ENCODE measurements at regions of chr2 and their contacts with region 1.

Region 1: GRCh38 chr2:43484323-43484930 is 111.4 kb downstream of the THADA start:
- DNase-seq: peak; percentile 65 to 78 (median 77)
- H3K4me3 ChIP-seq: no peak overlapping the region
- H3K4me3 Mint-ChIP-seq: no peak overlapping the region
- H3K27ac ChIP-seq: peak overlapping the region in 1 of 2 donors; percentile 60
- H3K27ac Mint-ChIP-seq: peak overlapping the region in 5 of 7 donors; percentile 45 to 80 (median 59)
- H3K4me1 ChIP-seq: peaks cover 21 to 29% of the 10 kb centered on the region in 2 donors
- H3K4me1 Mint-ChIP-seq: peaks cover 49% of the 10 kb centered on the region
- H3K27me3 ChIP-seq: no peaks in the 10 kb centered on the region
- H3K27me3 Mint-ChIP-seq: no peaks in the 10 kb centered on the region
- CTCF ChIP-seq: peak; percentile 87

Region 2: GRCh38 chr2:42944779-42945415 is 539.5 kb before region 1 on chr2:
- intact Hi-C with region 1: loop called (anchors 5 kb)
- DNase-seq: no peak
- H3K4me3 ChIP-seq: no peak overlapping the region
- H3K4me3 Mint-ChIP-seq: no peak overlapping the region
- H3K27ac ChIP-seq: no peak overlapping the region
- H3K27ac Mint-ChIP-seq: peak overlapping the region in 1 of 7 donors; percentile 35
- H3K4me1 ChIP-seq: peaks cover 22 to 30% of the 10 kb centered on the region in 2 donors
- H3K4me1 Mint-ChIP-seq: peaks cover 38% of the 10 kb centered on the region
- H3K27me3 ChIP-seq: no peaks in the 10 kb centered on the region
- H3K27me3 Mint-ChIP-seq: peaks cover 0 to 3% (median 1%) of the 10 kb centered on the region in 3 donors
- CTCF ChIP-seq: no peak

Region 3: GRCh38 chr2:42974721-42975717 is 509.4 kb before region 1 on chr2:
- intact Hi-C with region 1: loop called (anchors 5 to 10 kb)
- DNase-seq: peak; percentile 35 to 65 (median 46)
- H3K4me3 ChIP-seq: peak overlapping the region; percentile 17 to 72 (median 48)
- H3K4me3 Mint-ChIP-seq: peak overlapping the region; percentile 72 to 87
- H3K27ac ChIP-seq: peak overlapping the region; percentile 49 to 83
- H3K27ac Mint-ChIP-seq: peak overlapping the region; percentile 43 to 90 (median 83)
- H3K4me1 ChIP-seq: peaks cover 41 to 59% of the 10 kb centered on the region in 2 donors
- H3K4me1 Mint-ChIP-seq: peaks cover 71% of the 10 kb centered on the region
- H3K27me3 ChIP-seq: no peaks in the 10 kb centered on the region
- H3K27me3 Mint-ChIP-seq: peaks cover 0 to 3% (median 0%) of the 10 kb centered on the region in 3 donors
- CTCF ChIP-seq: peak; percentile 95

Region 4: GRCh38 chr2:43305517-43305916 is 178.9 kb before region 1 on chr2:
- intact Hi-C with region 1: loop called in 1 of 2 experiments (anchors 10 kb)
- DNase-seq: peak; percentile 82 to 88 (median 86)
- H3K4me3 ChIP-seq: no peak overlapping the region
- H3K4me3 Mint-ChIP-seq: peak overlapping the region; percentile 49 to 58
- H3K27ac ChIP-seq: peak overlapping the region; percentile 96 to 97
- H3K27ac Mint-ChIP-seq: peak overlapping the region; percentile 99 to 100 (median 100)
- H3K4me1 ChIP-seq: peaks cover 48 to 56% of the 10 kb centered on the region in 2 donors
- H3K4me1 Mint-ChIP-seq: peaks cover 62% of the 10 kb centered on the region
- H3K27me3 ChIP-seq: no peaks in the 10 kb centered on the region
- H3K27me3 Mint-ChIP-seq: peaks cover 0 to 5% (median 0%) of the 10 kb centered on the region in 3 donors
- CTCF ChIP-seq: no peak

Region 5: DNA sequence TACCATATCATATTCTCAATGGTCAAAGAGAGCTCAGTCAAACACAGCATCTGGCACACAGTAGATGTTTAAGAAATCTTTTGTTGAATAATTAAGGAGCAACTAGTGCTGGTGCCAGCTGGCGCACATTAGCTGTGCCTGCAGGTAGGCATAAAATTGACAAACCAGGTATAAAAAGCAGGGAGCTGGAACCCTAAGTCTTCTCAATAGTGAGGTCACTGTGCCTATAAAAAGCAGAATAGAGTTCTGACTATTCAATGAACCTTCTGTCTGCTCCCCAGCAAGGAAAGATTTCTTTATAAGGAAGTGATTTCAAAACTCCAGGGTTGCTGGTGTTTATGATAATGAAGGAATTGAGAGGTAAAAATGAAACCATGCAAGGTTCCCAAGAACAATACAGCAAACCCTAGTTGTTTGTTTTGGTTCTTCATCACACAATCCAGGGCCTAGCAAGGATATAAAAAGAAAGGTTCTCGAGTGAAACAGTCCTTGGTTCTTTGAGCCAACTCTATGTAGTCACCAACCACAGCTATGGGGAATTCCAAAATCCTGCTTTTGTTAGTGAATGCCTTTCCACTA is 35.3 kb after region 1 on chr2:
- intact Hi-C with region 1: no loop called
- DNase-seq: peak; percentile 32 to 68 (median 55)
- H3K4me3 ChIP-seq: peak overlapping the region in 1 of 3 experiments; percentile 37
- H3K4me3 Mint-ChIP-seq: peak overlapping the region in 1 of 2 donors; percentile 47
- H3K27ac ChIP-seq: peak overlapping the region in 1 of 2 donors; percentile 85
- H3K27ac Mint-ChIP-seq: peak overlapping the region; percentile 72 to 88 (median 84)
- H3K4me1 ChIP-seq: peaks cover 11 to 12% of the 10 kb centered on the region in 2 donors
- H3K4me1 Mint-ChIP-seq: peaks cover 16% of the 10 kb centered on the region
- H3K27me3 ChIP-seq: no peaks in the 10 kb centered on the region
- H3K27me3 Mint-ChIP-seq: peaks cover 0 to 1% (median 0%) of the 10 kb centered on the region in 3 donors
- CTCF ChIP-seq: no peak

Region 6: DNA sequence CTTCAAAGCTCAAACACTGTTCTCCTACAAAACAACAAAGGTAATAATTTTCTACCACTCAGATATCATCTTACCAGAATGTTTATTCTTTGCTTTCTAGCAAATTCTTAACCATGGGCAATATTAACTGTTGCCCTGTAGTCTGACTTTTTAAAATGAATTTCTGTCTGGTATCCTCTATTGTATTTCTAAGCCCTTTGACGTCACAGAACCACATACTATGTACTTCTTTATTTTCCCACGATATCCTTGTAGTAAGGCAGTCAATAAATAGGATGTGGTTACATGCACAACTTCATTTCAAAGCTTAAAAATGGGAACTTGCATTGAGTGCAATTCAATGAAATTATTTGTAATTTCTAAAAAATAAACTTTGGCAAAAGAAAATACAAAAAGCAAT is 52.7 kb after region 1 on chr2:
- intact Hi-C with region 1: loop called in 1 of 2 experiments (anchors 5 kb)
- DNase-seq: peak; percentile 80 to 92 (median 85)
- H3K4me3 ChIP-seq: no peak overlapping the region
- H3K4me3 Mint-ChIP-seq: peak overlapping the region in 1 of 2 donors; percentile 21
- H3K27ac ChIP-seq: peak overlapping the region in 1 of 2 donors; percentile 86
- H3K27ac Mint-ChIP-seq: peak overlapping the region; percentile 85 to 96 (median 92)
- H3K4me1 ChIP-seq: peaks cover 32 to 48% of the 10 kb centered on the region in 2 donors
- H3K4me1 Mint-ChIP-seq: peaks cover 41% of the 10 kb centered on the region
- H3K27me3 ChIP-seq: no peaks in the 10 kb centered on the region
- H3K27me3 Mint-ChIP-seq: no peaks in the 10 kb centered on the region
- CTCF ChIP-seq: no peak